Natural killer cell (primary cell): ENCODE measurements at regions of chr16 and their contacts with region 1.

Region 1: DNA sequence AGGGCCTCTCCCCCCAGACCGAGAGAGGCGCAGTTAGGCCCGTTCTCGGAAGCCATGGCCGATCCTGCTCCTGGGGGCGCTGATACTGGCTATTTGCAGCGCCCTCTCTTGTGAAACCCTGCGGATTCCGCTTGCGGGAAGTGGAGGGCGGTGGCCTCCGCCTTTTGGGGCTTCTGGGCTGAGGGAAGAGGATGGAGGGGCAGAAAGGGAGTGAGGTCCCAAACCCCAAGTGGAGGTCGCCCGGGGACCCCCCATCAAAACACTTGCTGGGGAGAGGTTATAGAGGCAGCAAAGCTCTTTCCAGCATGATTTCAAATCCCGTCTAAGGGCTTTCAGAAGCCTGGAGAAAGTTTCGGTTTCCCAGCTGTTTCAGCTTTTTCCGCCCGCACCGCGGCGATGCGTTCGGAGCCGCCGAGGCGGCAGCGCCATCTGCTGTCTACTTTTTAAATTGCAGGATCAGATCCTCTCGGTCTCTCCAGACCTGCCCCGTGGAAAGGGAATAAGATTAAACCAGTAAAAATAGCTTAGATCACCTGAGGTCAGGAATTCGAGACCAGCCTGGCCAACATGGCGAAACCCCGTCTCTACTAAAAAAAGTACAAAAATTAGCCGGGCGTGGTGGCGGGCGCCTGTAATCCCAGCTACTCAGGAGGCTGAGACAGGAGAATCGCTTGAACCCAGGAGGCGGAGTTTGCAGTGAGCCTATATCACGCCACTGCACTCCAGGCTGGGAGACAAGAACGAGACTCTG is 15.8 kb downstream of the SNX20 start:
- DNase-seq: peak; percentile 80 to 90
- ATAC-seq: peak; percentile 73 to 78 (median 74)
- H3K4me3 ChIP-seq: peak overlapping the region; percentile 56
- H3K4me3 Mint-ChIP-seq: peak overlapping the region; percentile 83
- H3K27ac ChIP-seq: peak overlapping the region; percentile 67
- H3K27ac Mint-ChIP-seq: peak overlapping the region; percentile 73 to 93
- H3K4me1 ChIP-seq: peaks cover 29% of the 10 kb centered on the region
- H3K4me1 Mint-ChIP-seq: peaks cover 23 to 30% of the 10 kb centered on the region in 2 donors
- H3K27me3 ChIP-seq: no peaks in the 10 kb centered on the region
- H3K27me3 Mint-ChIP-seq: no peaks in the 10 kb centered on the region
- CTCF ChIP-seq: peak; percentile 80

Region 2: GRCh38 chr16:50548125-50548908 is 117.0 kb before region 1 on chr16 and contains the start of gene NKD1:
- intact Hi-C with region 1: loop called (anchors 5 kb)
- DNase-seq: peak; percentile 67 to 85
- ATAC-seq: peak; percentile 80 to 88 (median 85)
- H3K4me3 ChIP-seq: peak within 1 kb of the TSS; percentile 82
- H3K4me3 Mint-ChIP-seq: peak within 1 kb of the TSS; percentile 95
- H3K27ac ChIP-seq: peak within 1 kb of the TSS; percentile 43
- H3K27ac Mint-ChIP-seq: peak within 1 kb of the TSS; percentile 83 to 88
- H3K4me1 ChIP-seq: peaks cover 13% of the 10 kb centered on the region
- H3K4me1 Mint-ChIP-seq: peaks cover 5 to 16% of the 10 kb centered on the region in 2 donors
- H3K27me3 ChIP-seq: peaks cover 6% of the 10 kb centered on the region
- H3K27me3 Mint-ChIP-seq: peaks cover 13 to 31% of the 10 kb centered on the region in 2 donors
- CTCF ChIP-seq: no peak
- total RNA-seq, gene NKD1: 0.75 to 1.5 (median 1.0) TPM

Region 3: DNA sequence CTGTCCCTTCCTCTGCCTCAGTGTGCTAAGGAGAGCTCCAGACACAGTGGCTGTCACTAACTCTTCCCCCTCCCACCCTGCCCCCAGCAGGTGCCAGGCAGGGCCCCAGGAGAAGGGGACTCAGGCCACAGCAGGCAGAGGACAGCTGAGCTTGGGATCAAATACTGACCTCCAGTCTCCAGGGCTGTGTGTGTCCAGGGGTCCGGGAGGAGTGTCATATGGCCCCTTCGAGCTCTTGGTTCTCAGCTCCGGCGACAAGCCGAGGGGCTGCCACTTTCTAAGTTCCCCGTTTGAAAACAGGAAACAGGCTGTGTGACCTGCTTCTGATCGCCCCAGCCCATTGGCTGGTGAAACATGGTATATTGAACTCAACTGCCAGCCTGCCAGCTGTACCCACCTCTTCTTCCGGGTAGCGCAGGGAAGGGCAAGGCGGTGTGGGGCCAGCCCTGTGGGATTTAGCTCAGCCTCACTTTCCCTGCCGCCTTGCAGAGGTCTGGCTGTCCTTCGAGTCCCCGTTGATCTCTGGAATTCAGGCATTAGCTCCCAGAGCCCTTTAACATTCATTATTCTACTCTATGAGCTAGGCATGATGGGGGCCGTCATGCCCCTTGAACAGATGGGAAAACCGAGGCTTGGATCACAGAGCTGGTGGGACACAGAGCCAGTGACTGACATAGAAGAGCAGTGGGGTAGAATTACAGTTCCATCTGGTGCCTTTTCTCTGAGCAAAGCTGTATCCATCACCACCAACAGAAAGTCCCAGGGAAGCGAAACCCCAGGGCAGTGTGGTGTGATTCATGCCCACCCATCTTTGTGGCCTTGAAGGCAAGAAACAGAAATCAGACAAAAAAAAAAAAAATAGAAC is 15.9 kb after region 1 on chr16 and contains the start of gene SNX20:
- intact Hi-C with region 1: loop called (anchors 2 kb)
- DNase-seq: peak; percentile 53 to 84
- ATAC-seq: peak; percentile 79 to 82 (median 80)
- H3K4me3 ChIP-seq: peak within 1 kb of the TSS; percentile 74
- H3K4me3 Mint-ChIP-seq: peak within 1 kb of the TSS; percentile 85
- H3K27ac ChIP-seq: peak within 1 kb of the TSS; percentile 95
- H3K27ac Mint-ChIP-seq: peak within 1 kb of the TSS; percentile 95 to 96
- H3K4me1 ChIP-seq: peaks cover 87% of the 10 kb centered on the region
- H3K4me1 Mint-ChIP-seq: peaks cover 89% of the 10 kb centered on the region in 2 donors
- H3K27me3 ChIP-seq: no peaks in the 10 kb centered on the region
- H3K27me3 Mint-ChIP-seq: no peaks in the 10 kb centered on the region
- CTCF ChIP-seq: no peak
- total RNA-seq, gene SNX20: 33.0 to 53.9 (median 51.7) TPM

Region 4: DNA sequence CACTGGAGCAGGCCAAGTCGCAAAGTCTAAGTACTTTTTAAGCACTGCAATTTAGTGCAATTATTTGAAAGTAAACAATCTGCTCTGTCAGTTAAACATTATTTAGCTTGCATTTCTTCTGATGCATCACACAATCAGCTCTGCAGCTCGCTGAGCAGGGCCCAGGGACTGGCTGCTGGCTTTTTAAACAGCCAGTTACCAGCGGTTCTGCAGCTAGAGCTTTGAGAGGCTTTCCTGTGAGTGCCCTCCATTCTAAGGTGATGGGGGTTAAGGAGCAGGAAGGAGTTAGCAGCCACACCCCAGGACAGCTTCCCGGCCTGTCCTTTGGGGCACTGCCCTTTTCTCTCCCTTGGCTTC is 331.5 kb after region 1 on chr16:
- intact Hi-C with region 1: no loop called
- DNase-seq: no peak
- ATAC-seq: no peak
- H3K4me3 ChIP-seq: no peak overlapping the region
- H3K4me3 Mint-ChIP-seq: no peak overlapping the region
- H3K27ac ChIP-seq: no peak overlapping the region
- H3K27ac Mint-ChIP-seq: no peak overlapping the region
- H3K4me1 ChIP-seq: no peaks in the 10 kb centered on the region
- H3K4me1 Mint-ChIP-seq: no peaks in the 10 kb centered on the region
- H3K27me3 ChIP-seq: no peaks in the 10 kb centered on the region
- H3K27me3 Mint-ChIP-seq: peaks cover 0 to 3% of the 10 kb centered on the region in 2 donors
- CTCF ChIP-seq: no peak